ENCODE measurements at regions of chr5 and their contacts with region 1.

Region 1: GRCh38 chr5:69234457-69235268 is at the start of gene CDK7:
- DNase-seq: peak; percentile 92
- ATAC-seq: peak; percentile 99
- H3K4me3 ChIP-seq: peak within 1 kb of the TSS; percentile 77 to 99 (median 94)
- H3K4me3 Mint-ChIP-seq: peak within 1 kb of the TSS; percentile 100
- H3K27ac ChIP-seq: peak within 1 kb of the TSS; percentile 50 to 83
- H3K27ac Mint-ChIP-seq: peak within 1 kb of the TSS; percentile 93
- H3K4me1 ChIP-seq: peaks cover 6 to 21% of the 10 kb centered on the region in 2 donors
- H3K4me1 Mint-ChIP-seq: peaks cover 38% of the 10 kb centered on the region
- H3K27me3 ChIP-seq: no peaks in the 10 kb centered on the region
- H3K27me3 Mint-ChIP-seq: no peaks in the 10 kb centered on the region
- CTCF ChIP-seq: no peak
- total RNA-seq, gene CDK7: 30.6 and 36.5 TPM in 2 replicates

Region 2: GRCh38 chr5:68433923-68434879 is 800.5 kb before region 1 on chr5:
- CTCF ChIA-PET with region 1: no interaction called
- POLR2A ChIA-PET with region 1: interaction called, 13 read pairs
- intact Hi-C with region 1: no loop called
- DNase-seq: peak; percentile 84
- ATAC-seq: peak; percentile 97
- H3K4me3 ChIP-seq: peak overlapping the region in 4 of 5 experiments; percentile 12 to 29 (median 14)
- H3K4me3 Mint-ChIP-seq: peak overlapping the region; percentile 78
- H3K27ac ChIP-seq: peak overlapping the region; percentile 50 to 64
- H3K27ac Mint-ChIP-seq: peak overlapping the region; percentile 89
- H3K4me1 ChIP-seq: peaks cover 28 to 30% of the 10 kb centered on the region in 2 donors
- H3K4me1 Mint-ChIP-seq: peaks cover 33% of the 10 kb centered on the region
- H3K27me3 ChIP-seq: no peaks in the 10 kb centered on the region
- H3K27me3 Mint-ChIP-seq: no peaks in the 10 kb centered on the region
- CTCF ChIP-seq: no peak

Region 3: DNA sequence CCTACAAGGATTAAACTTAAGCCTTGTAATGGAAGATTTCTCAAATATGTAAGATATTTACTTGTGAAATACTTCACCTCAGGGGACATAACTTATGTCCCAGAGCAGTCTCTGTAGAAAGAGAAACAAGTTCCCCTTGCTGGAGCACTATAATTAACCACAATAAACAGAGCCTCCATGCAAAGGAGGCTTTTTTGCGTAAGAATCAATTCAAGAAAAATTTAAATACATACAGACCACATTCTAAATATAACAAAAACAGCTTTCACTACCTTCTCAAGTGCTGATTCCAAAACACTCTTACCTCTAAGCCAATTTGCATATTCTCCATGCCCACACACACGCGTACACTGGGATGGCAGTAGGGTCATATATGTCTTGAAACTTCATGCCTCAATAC is 98.4 kb before region 1 on chr5:
- CTCF ChIA-PET with region 1: no interaction called
- POLR2A ChIA-PET with region 1: no interaction called
- intact Hi-C with region 1: loop called (anchors 1 kb)
- DNase-seq: peak; percentile 64
- ATAC-seq: peak; percentile 87
- H3K4me3 ChIP-seq: no peak overlapping the region
- H3K4me3 Mint-ChIP-seq: peak overlapping the region; percentile 63
- H3K27ac ChIP-seq: peak overlapping the region; percentile 41 to 45
- H3K27ac Mint-ChIP-seq: peak overlapping the region; percentile 90
- H3K4me1 ChIP-seq: peaks cover 5 to 18% of the 10 kb centered on the region in 2 donors
- H3K4me1 Mint-ChIP-seq: peaks cover 29% of the 10 kb centered on the region
- H3K27me3 ChIP-seq: no peaks in the 10 kb centered on the region
- H3K27me3 Mint-ChIP-seq: no peaks in the 10 kb centered on the region
- CTCF ChIP-seq: no peak

Region 4: DNA sequence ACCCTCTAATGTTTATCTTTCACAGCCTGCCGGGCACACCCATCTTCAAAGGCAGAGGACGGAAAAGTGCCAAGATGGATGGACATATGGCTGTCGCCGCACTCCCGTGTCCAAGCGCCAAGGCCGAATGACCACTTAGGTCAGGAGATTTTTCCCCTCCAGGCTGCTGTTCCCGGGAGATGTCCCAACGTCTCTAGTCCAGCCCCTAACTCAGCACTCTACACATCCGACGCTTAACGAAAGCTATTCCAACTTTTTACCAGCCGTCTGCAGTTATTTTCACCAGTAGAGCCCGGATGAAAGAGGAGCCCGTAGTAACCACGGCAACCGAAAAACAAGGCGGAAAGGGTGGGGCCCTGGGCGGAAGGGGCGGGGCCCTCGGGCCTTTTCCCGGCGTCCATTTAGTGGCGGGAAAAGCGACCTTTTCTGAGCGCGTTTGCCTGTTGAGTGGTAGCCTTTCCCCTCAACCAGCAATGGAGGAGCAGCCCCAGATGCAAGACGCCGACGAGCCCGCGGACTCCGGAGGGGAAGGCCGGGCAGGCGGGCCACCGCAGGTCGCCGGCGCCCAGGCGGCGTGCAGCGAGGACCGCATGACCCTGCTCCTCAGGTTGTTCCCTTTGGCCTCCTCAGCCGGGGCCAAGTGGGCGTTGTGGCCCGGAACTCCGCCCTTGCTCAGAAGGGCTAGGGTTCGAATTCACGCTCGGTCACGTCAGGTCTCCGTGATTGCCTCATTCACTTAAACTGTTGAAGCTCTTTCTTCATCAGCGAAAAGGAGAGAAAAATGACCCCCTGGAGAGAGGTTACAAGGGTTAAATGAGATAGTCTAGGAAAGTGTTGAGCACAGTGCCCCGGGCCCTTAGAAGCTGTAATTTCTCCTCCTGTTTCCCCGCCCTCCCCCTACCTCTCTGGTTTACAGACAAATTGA is 45.2 kb before region 1 on chr5 and contains the start of gene CENPH:
- CTCF ChIA-PET with region 1: no interaction called
- POLR2A ChIA-PET with region 1: no interaction called
- intact Hi-C with region 1: loop called (anchors 1 kb)
- DNase-seq: peak; percentile 91
- ATAC-seq: peak; percentile 92
- H3K4me3 ChIP-seq: peak within 1 kb of the TSS; percentile 64 to 96 (median 80)
- H3K4me3 Mint-ChIP-seq: peak within 1 kb of the TSS; percentile 95
- H3K27ac ChIP-seq: peak within 1 kb of the TSS; percentile 30 to 88
- H3K27ac Mint-ChIP-seq: peak within 1 kb of the TSS; percentile 93
- H3K4me1 ChIP-seq: peaks cover 9 to 14% of the 10 kb centered on the region in 2 donors
- H3K4me1 Mint-ChIP-seq: peaks cover 17% of the 10 kb centered on the region
- H3K27me3 ChIP-seq: no peaks in the 10 kb centered on the region
- H3K27me3 Mint-ChIP-seq: no peaks in the 10 kb centered on the region
- CTCF ChIP-seq: no peak
- total RNA-seq, gene CENPH: 11.9 and 12.0 TPM in 2 replicates

Region 5: GRCh38 chr5:69217548-69218526 is 16.8 kb before region 1 on chr5:
- CTCF ChIA-PET with region 1: interaction called, 11 read pairs
- POLR2A ChIA-PET with region 1: interaction called, 5 read pairs
- intact Hi-C with region 1: loop called (anchors 1 kb)
- DNase-seq: peak; percentile 95
- ATAC-seq: peak; percentile 90
- H3K4me3 ChIP-seq: peak overlapping the region; percentile 85 to 100 (median 97)
- H3K4me3 Mint-ChIP-seq: peak overlapping the region; percentile 99
- H3K27ac ChIP-seq: peak overlapping the region; percentile 93 to 94
- H3K27ac Mint-ChIP-seq: peak overlapping the region; percentile 98
- H3K4me1 ChIP-seq: peaks cover 8 to 17% of the 10 kb centered on the region in 2 donors
- H3K4me1 Mint-ChIP-seq: peaks cover 20% of the 10 kb centered on the region
- H3K27me3 ChIP-seq: no peaks in the 10 kb centered on the region
- H3K27me3 Mint-ChIP-seq: no peaks in the 10 kb centered on the region
- CTCF ChIP-seq: no peak

Region 6: GRCh38 chr5:69334793-69335268 is 100.2 kb after region 1 on chr5:
- CTCF ChIA-PET with region 1: interaction called, 12 read pairs
- POLR2A ChIA-PET with region 1: no interaction called
- intact Hi-C with region 1: loop called (anchors 1 kb)
- DNase-seq: peak; percentile 78
- ATAC-seq: peak; percentile 67
- H3K4me3 ChIP-seq: no peak overlapping the region
- H3K4me3 Mint-ChIP-seq: peak overlapping the region; percentile 30
- H3K27ac ChIP-seq: no peak overlapping the region
- H3K27ac Mint-ChIP-seq: peak overlapping the region; percentile 56
- H3K4me1 ChIP-seq: peaks cover 10 to 17% of the 10 kb centered on the region in 2 donors
- H3K4me1 Mint-ChIP-seq: peaks cover 15% of the 10 kb centered on the region
- H3K27me3 ChIP-seq: no peaks in the 10 kb centered on the region
- H3K27me3 Mint-ChIP-seq: no peaks in the 10 kb centered on the region
- CTCF ChIP-seq: peak; percentile 62

Region 7: GRCh38 chr5:69369369-69370121 is 134.9 kb after region 1 on chr5 and contains the starts of genes AK6, RAD17 and TAF9:
- CTCF ChIA-PET with region 1: no interaction called
- POLR2A ChIA-PET with region 1: no interaction called
- intact Hi-C with region 1: loop called (anchors 1 kb)
- DNase-seq: peak; percentile 99
- ATAC-seq: peak; percentile 95
- H3K4me3 ChIP-seq: peak within 1 kb of the TSS; percentile 69 to 89 (median 83)
- H3K4me3 Mint-ChIP-seq: peak within 1 kb of the TSS; percentile 96
- H3K27ac ChIP-seq: peak within 1 kb of the TSS; percentile 96 to 99
- H3K27ac Mint-ChIP-seq: peak within 1 kb of the TSS; percentile 100
- H3K4me1 ChIP-seq: peaks cover 22 to 26% of the 10 kb centered on the region in 2 donors
- H3K4me1 Mint-ChIP-seq: peaks cover 41% of the 10 kb centered on the region
- H3K27me3 ChIP-seq: no peaks in the 10 kb centered on the region
- H3K27me3 Mint-ChIP-seq: no peaks in the 10 kb centered on the region
- CTCF ChIP-seq: no peak
- total RNA-seq, gene AK6: 21.7 and 25.4 TPM in 2 replicates
- total RNA-seq, gene RAD17: 39.6 and 41.0 TPM in 2 replicates
- total RNA-seq, gene TAF9: 41.6 and 42.0 TPM in 2 replicates

Measured in B cell (primary cell).